Activated naive CD4-positive, alpha-beta T cell treated with anti-CD3 and anti-CD28 coated beads for 36 hours (primary cell): ENCODE measurements at regions of chr2 and their contacts with region 1.

Region 1: DNA sequence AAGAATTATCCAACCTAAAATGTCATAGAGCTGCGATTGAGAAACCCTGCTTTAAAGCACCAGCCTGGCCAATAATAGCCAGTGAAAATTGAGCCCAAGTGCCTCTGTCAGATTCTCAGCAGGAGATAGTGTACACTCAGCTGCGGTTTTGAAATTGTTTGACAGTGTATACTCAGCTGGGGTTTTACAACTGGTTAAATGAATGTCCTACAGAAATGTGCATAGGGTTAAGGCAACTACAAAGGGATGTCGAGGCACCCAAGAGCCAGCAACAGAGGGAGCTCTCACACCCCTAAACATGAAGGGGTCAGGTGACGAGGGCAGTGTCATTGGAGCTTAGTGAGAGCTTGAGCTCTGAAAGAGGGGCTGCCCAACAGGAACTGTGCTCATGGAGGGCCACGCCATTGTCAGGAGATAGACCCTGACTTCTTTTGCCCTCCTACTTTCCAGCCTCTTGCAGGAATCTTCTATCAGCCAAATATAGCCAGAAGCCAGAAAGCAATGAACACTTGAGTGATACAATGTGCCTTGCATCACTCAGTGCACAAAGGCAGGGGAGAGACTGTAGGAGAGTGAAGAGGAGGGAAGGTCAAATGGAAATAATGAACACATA is 15.1 kb downstream of the ACTG2 start:
- DNase-seq: peak; percentile 79
- H3K4me3 Mint-ChIP-seq: no peak overlapping the region
- H3K27ac Mint-ChIP-seq: no peak overlapping the region
- H3K4me1 Mint-ChIP-seq: peaks cover 5% of the 10 kb centered on the region
- H3K27me3 Mint-ChIP-seq: no peaks in the 10 kb centered on the region

Region 2: DNA sequence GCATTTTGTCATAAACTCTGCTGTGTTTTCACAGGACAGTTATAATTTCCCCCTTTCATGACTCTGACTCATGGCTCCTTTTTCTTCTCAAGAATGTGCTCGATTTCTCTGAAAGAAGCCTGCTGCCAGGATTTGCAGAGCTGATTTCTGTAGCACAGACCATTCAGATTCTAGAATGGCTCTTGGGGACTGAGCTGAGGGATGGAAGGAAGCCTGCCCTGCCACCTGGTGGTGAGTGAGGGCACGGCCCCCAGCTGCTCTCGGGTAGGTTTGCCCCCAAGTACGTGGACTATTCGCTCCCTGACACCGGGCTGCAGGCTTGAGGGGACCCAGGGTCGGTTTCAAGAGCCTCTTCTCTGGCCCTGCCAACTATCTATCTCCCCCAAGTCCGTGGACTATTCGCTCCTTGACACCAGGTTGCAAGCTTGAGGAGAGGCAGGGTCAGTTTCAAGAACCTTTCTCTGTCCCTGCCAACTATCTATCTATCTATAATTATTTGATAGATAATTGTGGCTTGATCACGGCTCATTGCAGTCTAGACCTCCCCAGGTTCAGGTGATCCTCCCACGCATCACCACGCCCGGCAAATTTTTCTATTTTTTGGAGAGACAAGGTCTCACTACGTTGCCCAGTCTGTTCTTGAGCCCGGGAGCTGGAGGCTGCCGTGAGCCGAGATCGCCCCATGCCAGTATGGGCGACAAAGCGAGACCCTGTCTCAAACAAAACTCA is 695.3 kb before region 1 on chr2:
- CTCF ChIA-PET with region 1: no interaction called
- intact Hi-C with region 1: no loop called
- DNase-seq: peak; percentile 85
- H3K4me3 Mint-ChIP-seq: no peak overlapping the region
- H3K27ac Mint-ChIP-seq: no peak overlapping the region
- H3K4me1 Mint-ChIP-seq: peaks cover 29% of the 10 kb centered on the region
- H3K27me3 Mint-ChIP-seq: peaks cover 3% of the 10 kb centered on the region

Region 3: GRCh38 chr2:74104839-74105238 is 196.9 kb after region 1 on chr2:
- CTCF ChIA-PET with region 1: interaction called, 3 read pairs
- intact Hi-C with region 1: loop called (anchors 10 kb)
- DNase-seq: no peak
- H3K4me3 Mint-ChIP-seq: no peak overlapping the region
- H3K27ac Mint-ChIP-seq: no peak overlapping the region
- H3K4me1 Mint-ChIP-seq: no peaks in the 10 kb centered on the region
- H3K27me3 Mint-ChIP-seq: no peaks in the 10 kb centered on the region